Posterior cingulate gyrus (tissue), 11 donors: ENCODE measurements at regions of chr20 and their contacts with region 1.

Region 1: DNA sequence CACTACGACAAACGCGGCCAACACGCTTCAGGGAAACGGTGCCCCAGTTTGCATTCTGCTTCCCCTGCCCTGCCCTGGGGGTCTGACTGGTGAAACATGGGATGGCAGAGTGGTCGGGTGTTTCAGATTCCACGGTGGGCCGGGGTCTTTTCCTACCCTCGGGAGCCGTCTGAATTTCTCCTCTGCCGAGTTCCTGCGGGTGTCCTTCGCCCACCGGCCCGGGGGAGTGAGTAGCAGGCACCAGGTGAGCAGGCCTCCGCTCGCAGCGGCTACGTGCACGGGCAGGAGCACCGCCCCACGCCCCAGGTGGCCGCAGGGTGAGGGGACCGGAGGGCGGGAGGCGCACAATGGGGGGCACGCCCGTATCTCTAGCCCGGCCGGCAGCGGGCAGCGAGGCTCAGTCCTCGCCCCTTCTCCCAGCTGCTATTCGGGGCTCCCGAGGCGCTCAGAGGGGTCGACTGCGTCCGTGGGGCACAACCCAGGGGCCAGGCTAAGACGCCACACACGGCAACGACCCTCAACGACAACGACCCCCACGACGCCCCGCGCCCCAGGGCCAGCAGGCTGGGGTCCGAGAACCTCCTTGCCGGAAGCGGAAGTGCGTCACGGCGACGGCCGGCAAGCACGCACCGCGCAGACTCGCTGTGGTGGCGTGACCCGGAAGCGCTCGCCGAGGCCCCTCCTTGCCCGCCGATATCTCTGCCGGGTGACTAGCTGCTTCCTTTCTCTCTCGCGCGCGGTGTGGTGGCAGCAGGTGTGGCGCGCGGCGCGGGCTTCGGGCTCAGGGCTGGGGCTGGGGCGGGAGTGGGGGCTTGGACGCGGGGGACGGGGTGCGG is at the start of gene RPS21:
- DNase-seq: peak; percentile 80 to 98 (median 89)

Region 2: GRCh38 chr20:62182613-62183425 is 203.8 kb before region 1 on chr20 and contains the start of gene MTG2:
- intact Hi-C with region 1: loop called (anchors 10 kb)
- DNase-seq: peak; percentile 89 to 99 (median 92)

Region 3: GRCh38 chr20:62201173-62202082 is 185.2 kb before region 1 on chr20:
- intact Hi-C with region 1: no loop called
- DNase-seq: peak in 4 of 10 donors; percentile 2 to 63 (median 56)

Region 4: GRCh38 chr20:62302341-62303058 is 84.1 kb before region 1 on chr20 and contains the start of gene ADRM1:
- intact Hi-C with region 1: loop called (anchors 1 kb)
- DNase-seq: peak; percentile 92 to 100 (median 96)

Region 5: DNA sequence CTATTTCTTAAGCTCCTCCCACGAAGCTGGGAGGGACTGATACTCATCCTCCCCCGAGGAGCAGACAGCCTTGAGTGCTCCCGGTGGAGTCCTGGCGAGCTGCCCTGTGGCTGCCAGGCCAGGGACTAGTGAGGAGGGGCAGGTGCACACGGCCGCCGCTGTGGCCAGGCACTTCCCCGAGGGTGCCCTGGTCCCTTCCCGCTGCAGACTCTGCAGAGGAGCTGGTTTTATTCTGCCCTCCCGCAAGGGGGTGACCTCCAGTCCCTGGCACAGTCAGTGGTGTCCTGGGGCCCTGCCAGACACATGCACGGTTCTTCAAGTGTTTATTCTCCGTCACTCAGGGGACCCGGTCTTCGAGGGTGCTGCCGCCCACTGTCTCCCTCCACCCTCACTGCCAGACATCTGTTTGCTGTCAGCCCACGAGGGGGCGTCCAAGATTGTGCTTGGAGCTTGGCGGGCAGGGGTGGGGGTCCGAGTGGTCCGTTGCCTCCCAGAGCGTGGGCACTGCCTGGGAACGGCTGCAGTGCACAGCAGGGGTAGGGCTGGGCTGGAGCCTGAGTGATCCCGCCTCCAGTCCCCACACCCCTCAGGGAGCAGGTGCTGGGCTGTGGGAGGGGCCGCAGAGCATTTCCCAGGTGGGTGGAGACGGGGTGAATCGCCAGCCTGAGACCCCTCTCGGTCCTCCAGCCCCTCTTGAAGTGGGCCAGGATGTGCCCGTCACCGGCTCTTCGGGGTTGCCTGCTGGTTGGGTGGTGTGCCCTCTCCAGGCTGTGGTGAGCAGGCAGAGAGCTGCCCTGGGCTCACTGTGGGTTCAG is 23.5 kb after region 1 on chr20:
- intact Hi-C with region 1: loop called (anchors 2 kb)
- DNase-seq: peak in 1 of 10 donors; percentile 21

Region 6: DNA sequence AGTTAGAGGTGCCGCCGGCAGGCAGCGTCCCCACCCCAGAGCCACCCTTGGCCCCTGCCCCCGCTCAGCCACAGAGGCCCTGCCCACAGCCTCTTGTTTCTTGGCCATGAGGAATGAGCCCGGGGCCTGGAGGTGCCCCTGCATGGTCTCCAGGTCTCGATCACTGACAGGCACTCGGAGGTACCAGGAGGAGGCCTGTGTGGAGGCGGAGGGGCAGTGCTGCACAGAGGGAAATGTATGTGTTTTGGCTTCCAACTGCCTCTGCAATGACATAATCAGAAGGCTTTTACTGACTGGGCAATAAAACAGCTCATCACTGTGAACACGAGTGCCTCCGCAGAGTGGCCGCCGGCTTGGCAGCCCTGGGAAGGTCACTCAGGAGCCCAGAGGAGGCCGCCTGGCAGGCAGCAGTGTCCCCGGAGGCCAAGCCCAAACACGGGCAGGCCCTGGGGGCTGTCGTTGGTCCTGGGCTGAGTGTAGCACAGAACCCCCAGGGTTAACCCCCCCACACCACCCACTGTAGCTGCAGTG is 150.3 kb after region 1 on chr20:
- intact Hi-C with region 1: no loop called
- DNase-seq: no peak